GM10248 (cell line): ENCODE measurements at regions of chr9 and their contacts with region 1.

Region 1: GRCh38 chr9:17531642-17532254 is 47.1 kb upstream of the SH3GL2 start:
- DNase-seq: peak; percentile 54
- CTCF ChIP-seq: peak; percentile 47

Region 2: GRCh38 chr9:17519761-17520160 is 12.0 kb before region 1 on chr9:
- CTCF ChIA-PET with region 1: interaction called, 24 read pairs
- POLR2A ChIA-PET with region 1: no interaction called
- DNase-seq: no peak
- CTCF ChIP-seq: no peak